ENCODE measurements at regions of chr2 and their contacts with region 1.

Region 1: GRCh38 chr2:105235388-105236054 is 6.0 kb upstream of the GPR45 start:
- DNase-seq: peak; percentile 85
- H3K4me3 ChIP-seq: no peak overlapping the region
- H3K27ac ChIP-seq: no peak overlapping the region
- H3K27me3 ChIP-seq: no peaks in the 10 kb centered on the region
- CTCF ChIP-seq: peak; percentile 86

Region 2: DNA sequence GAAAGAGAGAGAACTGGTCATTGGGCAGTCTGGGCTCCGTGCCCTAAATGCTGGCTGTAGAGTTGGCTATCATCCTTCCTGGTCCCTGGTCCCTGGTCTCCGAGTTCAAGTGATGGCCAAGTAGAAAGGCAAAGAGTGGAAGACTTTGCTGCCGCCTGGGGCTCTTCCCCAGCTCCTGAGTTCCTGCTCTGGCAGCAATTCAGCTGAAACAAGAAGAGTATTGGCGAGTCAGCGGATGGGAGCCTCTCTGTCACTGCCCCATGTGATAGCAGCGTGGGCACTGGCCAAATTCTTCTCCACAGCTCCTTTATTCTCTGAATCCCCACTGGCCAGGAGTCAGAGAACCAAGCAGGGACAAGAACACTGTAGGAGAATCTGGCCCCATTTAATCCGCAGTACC is 732.6 kb before region 1 on chr2:
- in situ Hi-C with region 1: no loop called
- DNase-seq: no peak
- H3K4me3 ChIP-seq: no peak overlapping the region
- H3K27ac ChIP-seq: no peak overlapping the region
- H3K27me3 ChIP-seq: no peaks in the 10 kb centered on the region
- CTCF ChIP-seq: no peak

Region 3: GRCh38 chr2:105114551-105114950 is 121.0 kb before region 1 on chr2:
- in situ Hi-C with region 1: loop called (anchors 25 kb)
- DNase-seq: peak; percentile 36
- H3K4me3 ChIP-seq: no peak overlapping the region
- H3K27ac ChIP-seq: no peak overlapping the region
- H3K27me3 ChIP-seq: no peaks in the 10 kb centered on the region
- CTCF ChIP-seq: peak; percentile 71

Region 4: DNA sequence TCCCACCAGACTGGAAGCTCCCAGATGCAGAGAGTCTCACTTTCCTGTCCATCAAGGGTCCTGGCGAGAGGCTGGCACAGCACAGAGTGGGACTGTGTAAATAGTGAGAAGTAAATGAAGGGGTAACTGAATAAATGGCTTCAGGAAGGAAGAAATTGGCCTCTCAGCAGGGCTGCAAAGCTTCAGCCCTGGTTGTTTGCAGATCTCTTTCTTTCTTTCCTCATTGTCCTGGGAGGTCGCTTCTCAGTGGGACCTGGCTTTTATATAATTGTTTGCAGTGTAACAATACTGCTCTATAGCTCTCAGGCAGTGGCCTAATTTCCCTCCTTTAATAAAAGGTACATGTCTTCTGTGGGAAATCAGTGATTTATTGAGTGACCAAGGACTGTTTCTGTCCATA is 68.8 kb before region 1 on chr2:
- in situ Hi-C with region 1: no loop called
- DNase-seq: no peak
- H3K4me3 ChIP-seq: no peak overlapping the region
- H3K27ac ChIP-seq: no peak overlapping the region
- H3K27me3 ChIP-seq: no peaks in the 10 kb centered on the region
- CTCF ChIP-seq: no peak

Region 5: GRCh38 chr2:105486762-105487141 is 251.2 kb after region 1 on chr2:
- in situ Hi-C with region 1: no loop called
- DNase-seq: no peak
- H3K4me3 ChIP-seq: no peak overlapping the region
- H3K27ac ChIP-seq: peak overlapping the region; percentile 65
- H3K27me3 ChIP-seq: no peaks in the 10 kb centered on the region
- CTCF ChIP-seq: no peak

Region 6: GRCh38 chr2:105522645-105523044 is 287.1 kb after region 1 on chr2:
- in situ Hi-C with region 1: no loop called
- DNase-seq: no peak
- H3K4me3 ChIP-seq: no peak overlapping the region
- H3K27ac ChIP-seq: no peak overlapping the region
- H3K27me3 ChIP-seq: no peaks in the 10 kb centered on the region
- CTCF ChIP-seq: no peak